ENCODE measurements at regions of chr3 and their contacts with region 1.

Region 1: GRCh38 chr3:13022348-13023234 is 50.6 kb downstream of the IQSEC1 start:
- DNase-seq: peak; percentile 93 to 95
- ATAC-seq: peak; percentile 88
- H3K4me3 ChIP-seq: no peak overlapping the region
- H3K27ac ChIP-seq: peak overlapping the region in 1 of 2 donors; percentile 7
- H3K4me1 ChIP-seq: no peaks in the 10 kb centered on the region
- H3K27me3 ChIP-seq: no peaks in the 10 kb centered on the region

Region 2: DNA sequence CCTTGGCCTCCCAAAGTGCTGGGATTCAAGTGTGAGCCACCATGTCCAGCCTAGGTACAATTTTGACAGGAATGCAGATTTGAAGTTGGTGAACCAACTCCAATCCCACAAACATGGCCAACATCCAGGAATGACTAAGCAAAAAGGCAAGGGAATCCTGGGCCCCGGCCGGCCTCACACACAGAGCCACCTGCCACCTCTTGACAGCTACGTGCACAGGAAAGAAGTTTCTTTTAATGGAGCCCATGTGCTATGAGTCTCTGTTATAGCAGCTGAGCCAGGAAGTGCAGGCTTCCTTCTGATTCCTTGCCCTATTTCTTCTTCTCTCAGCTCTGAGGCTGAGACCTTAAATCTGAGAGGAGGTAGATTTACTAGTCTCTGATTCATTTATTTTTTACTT is 272.4 kb before region 1 on chr3:
- intact Hi-C with region 1: no loop called
- DNase-seq: peak in 1 of 2 donors; percentile 51
- ATAC-seq: peak; percentile 31
- H3K4me3 ChIP-seq: no peak overlapping the region
- H3K27ac ChIP-seq: no peak overlapping the region
- H3K4me1 ChIP-seq: no peaks in the 10 kb centered on the region
- H3K27me3 ChIP-seq: no peaks in the 10 kb centered on the region

Region 3: GRCh38 chr3:12984023-12984823 is 38.4 kb before region 1 on chr3:
- intact Hi-C with region 1: no loop called
- DNase-seq: peak in 1 of 2 donors; percentile 82
- ATAC-seq: peak; percentile 83
- H3K4me3 ChIP-seq: no peak overlapping the region
- H3K27ac ChIP-seq: no peak overlapping the region
- H3K4me1 ChIP-seq: no peaks in the 10 kb centered on the region
- H3K27me3 ChIP-seq: no peaks in the 10 kb centered on the region

Region 4: GRCh38 chr3:13073326-13074005 is 50.9 kb after region 1 on chr3 and contains the start of gene IQSEC1:
- intact Hi-C with region 1: loop called (anchors 5 kb)
- DNase-seq: peak; percentile 81 to 92
- ATAC-seq: peak; percentile 55
- H3K4me3 ChIP-seq: no peak within 1 kb of the TSS
- H3K27ac ChIP-seq: no peak within 1 kb of the TSS
- H3K4me1 ChIP-seq: no peaks in the 10 kb centered on the region
- H3K27me3 ChIP-seq: no peaks in the 10 kb centered on the region
- total RNA-seq, gene IQSEC1: 76.1 to 84.7 TPM